GM12878 (cell line): ENCODE measurements at regions of chr2 and their contacts with region 1.

Region 1: DNA sequence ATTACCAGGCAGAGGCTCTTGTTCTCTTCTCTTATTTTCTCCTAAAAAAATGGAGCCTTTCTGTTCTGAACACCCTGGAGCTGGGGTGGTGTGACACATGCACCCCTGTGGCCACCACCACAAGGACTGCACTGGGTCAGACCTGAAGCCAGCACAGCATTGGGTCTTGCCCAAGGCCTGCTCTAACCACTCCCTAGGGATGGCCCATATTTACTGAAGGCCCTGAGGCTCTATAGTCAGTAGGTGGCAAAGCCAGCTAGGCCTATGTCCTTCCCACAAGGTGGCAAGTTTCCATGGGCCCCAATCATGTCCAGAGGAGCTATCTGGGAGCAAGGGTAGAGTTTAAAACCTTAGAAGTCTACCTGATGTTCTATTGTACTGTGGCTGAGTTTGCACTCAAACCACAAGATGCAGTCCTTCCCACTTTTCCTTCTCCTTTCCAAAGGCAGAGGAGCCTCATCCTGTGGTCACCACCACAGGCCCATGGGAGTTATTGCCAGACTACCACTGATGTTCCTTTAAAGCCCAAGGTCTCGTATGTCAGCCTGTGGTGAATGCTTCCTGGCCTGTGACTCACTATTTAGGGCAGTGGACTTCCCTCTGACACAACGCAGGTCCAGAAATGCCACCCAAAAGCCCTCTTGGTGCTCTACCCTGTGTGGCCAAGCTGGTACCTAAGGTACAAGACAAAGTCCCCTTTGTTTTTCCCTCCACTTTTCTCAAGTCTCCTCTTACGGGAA is 15.0 kb upstream of the FMNL2 start:
- DNase-seq: no peak
- ATAC-seq: no peak
- H3K4me3 ChIP-seq: no peak overlapping the region
- H3K27ac ChIP-seq: no peak overlapping the region
- H3K4me1 ChIP-seq: no peaks in the 10 kb centered on the region
- H3K27me3 ChIP-seq: no peaks in the 10 kb centered on the region
- CTCF ChIP-seq: no peak
- EP300 ChIP-seq: no peak
- POLR2A ChIP-seq: no peak
- RAD21 ChIP-seq: no peak

Region 2: DNA sequence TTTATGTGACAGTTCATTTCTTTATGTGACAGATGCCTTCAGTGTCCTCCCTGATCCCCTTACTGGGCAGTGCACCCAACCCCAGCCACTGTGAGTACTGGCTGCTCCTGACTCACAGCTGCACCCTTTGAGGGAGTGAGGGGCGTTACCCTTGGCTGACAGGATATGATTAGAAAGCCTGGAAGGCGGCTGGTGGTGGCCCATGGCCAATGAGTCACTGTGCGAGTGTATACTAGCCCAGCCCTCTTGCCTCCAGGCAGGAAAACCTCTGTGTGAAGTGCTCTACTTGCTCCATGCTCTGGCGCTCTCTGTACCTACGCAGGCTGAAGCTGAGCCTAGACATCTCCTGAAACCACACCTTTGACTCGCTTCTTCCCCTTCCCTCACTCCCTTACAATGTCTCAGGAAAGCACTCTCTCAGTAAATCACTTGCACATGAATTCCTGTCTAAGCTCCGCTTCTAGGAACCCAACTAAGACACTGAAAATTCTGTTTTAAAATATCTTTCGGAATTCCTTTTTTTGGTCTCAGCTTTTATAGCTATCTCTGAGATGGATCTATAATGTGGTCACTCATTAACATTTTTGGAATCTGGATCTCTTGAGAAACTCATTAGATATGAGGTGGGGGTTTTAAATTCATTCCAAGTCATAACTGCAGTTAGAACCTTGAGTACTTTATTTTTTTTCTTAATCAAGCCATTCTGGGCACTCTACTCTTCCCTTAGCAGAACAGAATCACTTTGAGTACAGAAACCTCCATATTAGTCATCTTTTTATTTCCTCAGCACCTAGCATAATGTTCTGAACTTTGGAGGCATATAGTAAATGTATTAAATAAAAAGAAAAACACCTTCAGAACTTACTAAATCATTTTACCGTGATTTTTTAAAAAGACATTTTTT is 119.2 kb before region 1 on chr2:
- CTCF ChIA-PET with region 1: no interaction called
- POLR2A ChIA-PET with region 1: no interaction called
- RAD21 ChIA-PET with region 1: no interaction called
- SMC1A ChIA-PET with region 1: no interaction called
- in situ Hi-C with region 1: no loop called
- intact Hi-C with region 1: loop called (anchors 10 kb)
- DNase-seq: no peak
- ATAC-seq: peak; percentile 55
- H3K4me3 ChIP-seq: no peak overlapping the region
- H3K27ac ChIP-seq: no peak overlapping the region
- H3K4me1 ChIP-seq: no peaks in the 10 kb centered on the region
- H3K27me3 ChIP-seq: no peaks in the 10 kb centered on the region
- CTCF ChIP-seq: no peak
- EP300 ChIP-seq: no peak
- POLR2A ChIP-seq: no peak
- RAD21 ChIP-seq: no peak